Vagina (tissue), 2 donors: ENCODE measurements at regions of chr9 and their contacts with region 1.

Region 1: DNA sequence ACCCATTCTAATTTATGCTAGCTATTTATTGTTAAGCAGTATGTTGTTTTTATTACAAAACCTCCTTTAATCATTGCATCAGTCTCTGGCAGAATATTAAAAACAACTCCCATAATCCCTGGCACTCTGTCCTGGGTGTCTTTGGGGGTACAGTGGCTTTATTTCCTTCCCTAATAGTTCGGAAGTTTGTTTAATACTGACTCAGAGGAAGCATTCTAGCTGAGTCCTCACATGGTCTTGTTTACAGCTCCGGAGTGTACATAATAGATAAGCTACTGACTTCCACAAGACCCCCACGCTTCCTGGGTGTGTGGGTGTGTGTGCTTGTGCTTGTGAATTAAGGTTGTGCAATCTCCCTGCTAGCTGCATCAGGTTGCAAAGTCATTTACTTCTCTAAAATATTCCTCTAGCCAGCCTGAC is 149.8 kb upstream of the CDKN2B start:
- DNase-seq: no peak
- H3K4me3 ChIP-seq: no peak overlapping the region
- H3K27ac ChIP-seq: no peak overlapping the region
- H3K4me1 ChIP-seq: peaks cover 16% of the 10 kb centered on the region
- H3K27me3 ChIP-seq: no peaks in the 10 kb centered on the region
- CTCF ChIP-seq: no peak
- POLR2A ChIP-seq: no peak

Region 2: DNA sequence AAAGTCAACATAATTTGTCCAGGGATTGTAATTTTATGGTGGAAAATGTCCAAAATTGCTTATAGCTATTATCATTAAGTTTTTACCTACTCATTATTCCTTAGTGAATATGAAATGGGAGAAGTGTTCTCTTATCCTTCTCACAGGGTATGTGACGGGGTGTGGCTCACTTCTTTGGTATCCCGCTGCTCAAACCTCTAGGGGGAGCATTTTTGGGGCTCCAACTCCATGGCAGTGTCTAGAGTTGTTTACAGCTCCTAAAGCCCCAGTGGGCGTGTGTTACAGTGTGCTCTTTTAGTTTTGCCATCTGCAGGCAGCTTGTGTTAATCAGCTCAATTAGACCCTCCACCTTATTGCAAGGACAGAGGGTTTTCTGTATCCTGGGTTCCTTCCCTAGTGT is 254.2 kb before region 1 on chr9:
- intact Hi-C with region 1: no loop called
- DNase-seq: no peak
- H3K4me3 ChIP-seq: no peak overlapping the region
- H3K27ac ChIP-seq: no peak overlapping the region
- H3K4me1 ChIP-seq: no peaks in the 10 kb centered on the region
- H3K27me3 ChIP-seq: no peaks in the 10 kb centered on the region
- CTCF ChIP-seq: no peak
- POLR2A ChIP-seq: no peak

Region 3: DNA sequence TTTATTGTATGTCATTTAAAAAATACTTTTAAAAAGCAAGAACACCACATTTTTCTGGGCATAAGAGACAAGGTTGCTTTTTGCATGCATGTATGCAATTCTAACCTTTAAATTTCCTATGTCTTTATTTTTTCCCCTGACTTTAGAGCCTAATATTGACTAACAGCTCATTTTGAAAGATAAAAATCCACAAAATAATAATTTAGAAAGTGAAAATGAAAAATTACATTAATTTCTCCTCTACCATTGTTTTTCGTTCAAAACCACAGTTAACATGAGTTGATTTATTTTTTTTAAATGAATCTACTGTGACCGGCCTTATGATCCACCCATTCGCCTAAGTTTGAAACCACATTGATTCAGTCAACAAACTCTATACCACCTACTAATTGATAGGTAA is 12.3 kb before region 1 on chr9:
- intact Hi-C with region 1: loop called (anchors 1 kb)
- DNase-seq: no peak
- H3K4me3 ChIP-seq: no peak overlapping the region
- H3K27ac ChIP-seq: no peak overlapping the region
- H3K4me1 ChIP-seq: no peaks in the 10 kb centered on the region
- H3K27me3 ChIP-seq: no peaks in the 10 kb centered on the region
- CTCF ChIP-seq: no peak
- POLR2A ChIP-seq: no peak